CD8-positive, alpha-beta T cell (primary cell): ENCODE measurements at regions of chr16 and their contacts with region 1.

Region 1: DNA sequence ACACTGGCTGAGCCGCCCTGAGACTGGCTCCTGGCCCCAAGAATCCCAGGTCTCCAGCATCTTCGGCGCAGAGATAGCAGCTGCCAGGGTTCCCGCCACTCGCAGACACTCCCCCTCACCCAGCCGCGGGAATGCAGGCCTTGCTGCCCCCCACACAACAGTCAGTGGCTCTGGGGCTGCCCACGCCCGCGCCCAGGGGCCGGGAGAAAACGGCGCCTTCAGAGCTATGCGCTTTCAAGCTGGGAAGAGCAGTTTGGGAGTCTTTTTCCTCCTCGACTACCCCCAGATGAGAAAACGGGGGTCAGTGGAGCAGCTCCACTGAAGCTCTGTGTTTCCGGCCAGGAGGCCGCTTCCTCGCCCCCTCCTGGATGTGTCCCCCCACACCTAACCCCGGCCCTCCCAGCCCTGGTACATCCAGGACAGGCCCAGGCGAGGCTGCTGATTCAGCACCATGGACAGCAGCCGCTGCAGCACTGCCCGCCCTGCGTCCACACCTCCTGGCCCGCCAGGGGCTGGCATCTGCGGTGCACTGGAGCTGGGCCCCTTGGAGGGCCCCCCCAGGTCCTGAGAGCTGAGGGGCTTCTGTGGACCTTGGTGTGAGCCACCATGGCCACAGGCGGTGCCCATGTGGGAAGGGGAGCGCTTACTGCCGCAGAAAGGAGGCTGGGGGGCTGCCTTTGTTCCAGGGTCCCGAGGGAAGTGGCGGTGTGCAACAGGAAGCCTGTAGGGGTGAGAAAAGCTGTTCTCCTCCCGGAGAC is 35.7 kb downstream of the CACNA1H start:
- DNase-seq: peak; percentile 21 to 66 (median 48)
- ATAC-seq: peak; percentile 68
- H3K4me3 ChIP-seq: no peak overlapping the region
- H3K4me3 Mint-ChIP-seq: no peak overlapping the region
- H3K27ac ChIP-seq: no peak overlapping the region
- H3K27ac Mint-ChIP-seq: no peak overlapping the region
- H3K4me1 ChIP-seq: no peaks in the 10 kb centered on the region
- H3K4me1 Mint-ChIP-seq: no peaks in the 10 kb centered on the region
- H3K27me3 ChIP-seq: no peaks in the 10 kb centered on the region
- H3K27me3 Mint-ChIP-seq: no peaks in the 10 kb centered on the region
- CTCF ChIP-seq: no peak

Region 2: GRCh38 chr16:700684-701584 is 487.7 kb before region 1 on chr16:
- CTCF ChIA-PET with region 1: no interaction called
- POLR2A ChIA-PET with region 1: no interaction called
- intact Hi-C with region 1: loop called in 1 of 2 experiments (anchors 2 kb)
- DNase-seq: peak in 4 of 9 experiments; percentile 62 to 74 (median 70)
- ATAC-seq: peak; percentile 85
- H3K4me3 ChIP-seq: no peak overlapping the region
- H3K4me3 Mint-ChIP-seq: no peak overlapping the region
- H3K27ac ChIP-seq: no peak overlapping the region
- H3K27ac Mint-ChIP-seq: no peak overlapping the region
- H3K4me1 ChIP-seq: peaks cover 34% of the 10 kb centered on the region
- H3K4me1 Mint-ChIP-seq: peaks cover 12% of the 10 kb centered on the region
- H3K27me3 ChIP-seq: peaks cover 20 to 30% of the 10 kb centered on the region in 2 experiments
- H3K27me3 Mint-ChIP-seq: peaks cover 12% of the 10 kb centered on the region
- CTCF ChIP-seq: no peak